ENCODE measurements at regions of chr11 and their contacts with region 1.

Region 1: DNA sequence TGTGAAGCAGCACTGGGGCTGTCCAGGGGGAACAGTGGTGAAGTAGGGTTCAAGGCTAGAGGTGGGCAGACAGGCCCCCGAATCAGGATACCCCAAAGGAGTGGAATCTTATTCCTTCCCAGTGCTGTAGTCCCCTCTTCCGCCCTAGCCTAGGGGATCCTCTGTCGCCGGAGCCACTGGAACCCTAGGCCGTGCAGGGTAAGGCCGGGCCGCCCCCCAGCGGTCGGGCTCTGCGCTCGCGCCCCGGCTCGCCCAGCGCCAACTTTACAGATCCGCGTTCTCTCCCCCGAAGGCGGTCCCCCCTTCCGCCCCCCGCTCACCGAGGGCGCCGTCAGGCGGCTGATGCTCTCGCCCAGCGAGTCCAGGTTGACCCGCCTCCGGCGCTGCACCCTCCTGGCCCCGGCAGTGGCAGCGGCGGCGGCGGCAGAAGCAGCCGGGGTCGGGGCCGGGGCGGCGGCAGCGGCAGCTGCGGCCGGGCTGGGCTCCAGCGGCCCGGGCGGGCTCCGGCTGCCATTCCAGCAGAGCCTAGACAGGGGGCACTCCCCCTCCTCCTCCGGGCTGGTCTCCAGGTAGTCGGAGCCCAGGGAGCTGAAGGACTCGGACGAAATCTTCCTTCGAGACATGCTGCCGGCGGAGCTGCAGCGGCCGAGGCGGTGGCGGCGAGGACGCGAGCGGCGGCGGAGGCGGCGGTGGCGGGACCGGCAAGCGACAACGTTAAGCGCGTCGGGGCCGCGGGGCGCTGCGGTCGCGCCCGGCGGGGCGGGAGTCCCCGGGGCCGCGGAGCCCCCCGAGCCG is 646 bp downstream of the GUCY1A2 start:
- DNase-seq: peak; percentile 40
- H3K4me3 Mint-ChIP-seq: peak overlapping the region; percentile 65
- H3K27ac Mint-ChIP-seq: no peak overlapping the region
- H3K4me1 Mint-ChIP-seq: peaks cover 9% of the 10 kb centered on the region
- H3K27me3 Mint-ChIP-seq: peaks cover 40% of the 10 kb centered on the region
- CTCF ChIP-seq: peak; percentile 26

Region 2: GRCh38 chr11:106087815-106088435 is 929.7 kb before region 1 on chr11:
- CTCF ChIA-PET with region 1: no interaction called
- intact Hi-C with region 1: loop called (anchors 10 kb)
- DNase-seq: peak; percentile 20
- H3K4me3 Mint-ChIP-seq: no peak overlapping the region
- H3K27ac Mint-ChIP-seq: no peak overlapping the region
- H3K4me1 Mint-ChIP-seq: peaks cover 14% of the 10 kb centered on the region
- H3K27me3 Mint-ChIP-seq: no peaks in the 10 kb centered on the region
- CTCF ChIP-seq: peak; percentile 55

Region 3: DNA sequence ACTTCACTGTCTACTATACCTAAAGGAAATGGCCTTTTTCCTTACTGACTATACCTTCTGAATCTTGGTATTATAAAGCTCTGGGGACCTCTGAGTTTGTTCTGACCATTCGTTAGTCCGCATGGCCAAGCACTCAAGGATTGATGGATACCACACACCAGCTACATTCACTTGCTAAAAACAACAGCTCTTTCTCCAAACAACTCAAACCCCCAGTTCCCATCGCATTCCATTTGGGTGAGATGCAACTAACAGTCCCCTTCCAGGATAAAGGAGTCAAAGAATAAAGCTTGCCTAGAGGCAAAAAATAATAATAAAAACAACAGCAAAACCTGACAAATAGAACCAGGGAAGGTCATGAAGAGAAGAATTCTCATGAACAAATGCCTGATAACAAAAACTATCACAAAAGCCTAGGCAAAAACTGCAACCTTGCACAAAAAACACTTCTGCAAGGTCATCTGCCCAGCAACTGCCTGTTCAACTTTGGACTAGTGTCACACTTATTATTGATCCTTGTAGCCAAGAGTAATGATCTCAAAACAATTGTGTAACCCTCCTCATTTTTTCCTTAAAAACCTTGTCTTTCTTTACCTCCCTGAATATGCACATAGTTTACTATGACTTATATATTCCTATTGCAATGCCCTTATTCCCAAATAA is 139.6 kb after region 1 on chr11:
- CTCF ChIA-PET with region 1: no interaction called
- intact Hi-C with region 1: no loop called
- DNase-seq: no peak
- H3K4me3 Mint-ChIP-seq: no peak overlapping the region
- H3K27ac Mint-ChIP-seq: no peak overlapping the region
- H3K4me1 Mint-ChIP-seq: no peaks in the 10 kb centered on the region
- H3K27me3 Mint-ChIP-seq: no peaks in the 10 kb centered on the region
- CTCF ChIP-seq: no peak

Measured in Calu3 (cell line).